Naive thymus-derived CD8-positive, alpha-beta T cell (primary cell): ENCODE measurements at regions of chr16 and their contacts with region 1.

Region 1: GRCh38 chr16:29805378-29806098 is 791 bp upstream of the MAZ start:
- DNase-seq: peak; percentile 95 to 99 (median 98)
- ATAC-seq: peak; percentile 61 to 70
- H3K4me3 Mint-ChIP-seq: peak overlapping the region; percentile 87 to 100 (median 99)
- H3K27ac Mint-ChIP-seq: peak overlapping the region; percentile 98 to 100 (median 100)
- H3K4me1 Mint-ChIP-seq: peaks cover 22 to 50% (median 42%) of the 10 kb centered on the region in 4 donors
- H3K27me3 Mint-ChIP-seq: peaks cover 0 to 1% (median 0%) of the 10 kb centered on the region in 5 donors

Region 2: DNA sequence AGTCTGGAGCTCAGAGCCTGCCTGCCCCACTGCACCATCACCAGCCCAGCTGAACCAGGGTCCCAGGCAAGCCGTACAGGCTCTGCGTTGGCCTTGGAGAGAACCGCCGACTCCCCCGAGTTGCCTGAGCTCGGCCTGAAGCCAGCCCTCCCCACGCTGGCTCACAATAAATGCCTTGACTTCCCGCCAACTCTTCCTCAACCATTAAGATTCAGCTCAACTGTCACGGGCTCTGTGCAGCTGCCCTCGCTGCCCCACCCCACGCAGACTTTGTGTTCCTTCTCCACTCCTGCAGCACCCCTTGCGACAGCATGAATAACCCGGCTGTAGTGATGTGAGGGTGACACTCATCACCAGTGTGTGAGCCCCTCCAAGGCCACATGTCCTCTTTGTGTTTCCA is 131.3 kb before region 1 on chr16:
- POLR2A ChIA-PET with region 1: no interaction called
- DNase-seq: no peak
- ATAC-seq: peak; percentile 39 to 52
- H3K4me3 Mint-ChIP-seq: no peak overlapping the region
- H3K27ac Mint-ChIP-seq: peak overlapping the region; percentile 28 to 86 (median 62)
- H3K4me1 Mint-ChIP-seq: peaks cover 7 to 34% (median 26%) of the 10 kb centered on the region in 4 donors
- H3K27me3 Mint-ChIP-seq: no peaks in the 10 kb centered on the region

Region 3: GRCh38 chr16:29694384-29695195 is 110.9 kb before region 1 on chr16:
- POLR2A ChIA-PET with region 1: interaction called, 148 read pairs
- DNase-seq: no peak
- ATAC-seq: no peak
- H3K4me3 Mint-ChIP-seq: no peak overlapping the region
- H3K27ac Mint-ChIP-seq: no peak overlapping the region
- H3K4me1 Mint-ChIP-seq: peaks cover 2 to 8% (median 6%) of the 10 kb centered on the region in 4 donors
- H3K27me3 Mint-ChIP-seq: peaks cover 0 to 1% (median 0%) of the 10 kb centered on the region in 5 donors

Region 4: DNA sequence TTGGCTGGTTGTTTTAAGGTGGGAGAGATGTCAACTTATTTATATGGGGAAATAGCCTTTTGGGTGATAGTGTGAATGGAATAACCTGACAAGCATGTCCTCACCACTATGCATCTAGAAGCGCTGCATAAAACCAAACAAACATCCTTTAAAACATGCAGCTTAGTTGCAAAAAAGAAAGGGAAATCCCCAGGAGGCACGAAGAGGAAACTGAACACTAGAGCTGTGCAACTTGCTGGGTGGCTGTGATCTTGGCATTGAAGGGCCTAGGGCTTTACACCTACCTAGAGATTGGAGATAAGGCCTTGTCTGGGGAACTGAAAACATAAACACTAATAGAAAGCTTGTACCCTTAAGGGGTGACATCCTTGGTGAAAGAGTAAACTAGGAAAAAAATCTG is 67.0 kb before region 1 on chr16:
- POLR2A ChIA-PET with region 1: interaction called, 123 read pairs
- DNase-seq: peak; percentile 25 to 83 (median 72)
- ATAC-seq: peak; percentile 79 to 86
- H3K4me3 Mint-ChIP-seq: peak overlapping the region; percentile 36 to 80 (median 66)
- H3K27ac Mint-ChIP-seq: peak overlapping the region; percentile 82 to 100 (median 95)
- H3K4me1 Mint-ChIP-seq: peaks cover 58 to 88% (median 85%) of the 10 kb centered on the region in 4 donors
- H3K27me3 Mint-ChIP-seq: no peaks in the 10 kb centered on the region

Region 5: DNA sequence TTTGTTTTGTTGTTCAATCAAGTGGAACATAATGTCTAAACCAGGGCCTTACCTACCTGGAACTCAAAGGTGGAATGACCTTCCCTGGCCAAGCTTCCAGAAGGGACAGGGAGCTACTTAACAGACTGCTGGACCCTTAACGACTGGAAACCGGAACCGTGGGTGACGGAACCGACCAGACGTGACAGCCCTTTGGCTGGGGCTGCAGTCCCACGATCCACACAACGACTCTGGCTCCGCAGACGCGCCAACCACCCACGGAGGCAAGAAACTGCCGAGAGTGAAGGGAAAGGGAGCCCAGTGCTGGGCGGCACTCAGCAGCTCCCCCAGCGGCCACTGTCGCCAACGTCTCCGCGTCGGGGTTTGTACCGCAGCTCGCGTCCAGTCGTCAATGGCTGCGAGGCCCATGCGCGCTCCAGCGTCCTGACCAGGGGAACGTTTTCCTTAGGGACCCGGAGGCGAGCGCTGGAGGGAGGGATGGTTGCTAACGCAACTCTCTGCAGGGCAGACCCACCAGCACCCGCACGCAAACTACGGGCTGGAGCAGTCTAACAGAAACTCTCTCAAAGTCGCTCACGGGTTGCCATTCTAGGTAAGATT is 20.5 kb before region 1 on chr16:
- POLR2A ChIA-PET with region 1: interaction called, 240 read pairs
- DNase-seq: peak; percentile 50 to 82 (median 64)
- ATAC-seq: peak; percentile 89 to 93
- H3K4me3 Mint-ChIP-seq: peak overlapping the region; percentile 58 to 75 (median 72)
- H3K27ac Mint-ChIP-seq: peak overlapping the region; percentile 54 to 92 (median 82)
- H3K4me1 Mint-ChIP-seq: peaks cover 17 to 40% (median 32%) of the 10 kb centered on the region in 4 donors
- H3K27me3 Mint-ChIP-seq: no peaks in the 10 kb centered on the region

Region 6: DNA sequence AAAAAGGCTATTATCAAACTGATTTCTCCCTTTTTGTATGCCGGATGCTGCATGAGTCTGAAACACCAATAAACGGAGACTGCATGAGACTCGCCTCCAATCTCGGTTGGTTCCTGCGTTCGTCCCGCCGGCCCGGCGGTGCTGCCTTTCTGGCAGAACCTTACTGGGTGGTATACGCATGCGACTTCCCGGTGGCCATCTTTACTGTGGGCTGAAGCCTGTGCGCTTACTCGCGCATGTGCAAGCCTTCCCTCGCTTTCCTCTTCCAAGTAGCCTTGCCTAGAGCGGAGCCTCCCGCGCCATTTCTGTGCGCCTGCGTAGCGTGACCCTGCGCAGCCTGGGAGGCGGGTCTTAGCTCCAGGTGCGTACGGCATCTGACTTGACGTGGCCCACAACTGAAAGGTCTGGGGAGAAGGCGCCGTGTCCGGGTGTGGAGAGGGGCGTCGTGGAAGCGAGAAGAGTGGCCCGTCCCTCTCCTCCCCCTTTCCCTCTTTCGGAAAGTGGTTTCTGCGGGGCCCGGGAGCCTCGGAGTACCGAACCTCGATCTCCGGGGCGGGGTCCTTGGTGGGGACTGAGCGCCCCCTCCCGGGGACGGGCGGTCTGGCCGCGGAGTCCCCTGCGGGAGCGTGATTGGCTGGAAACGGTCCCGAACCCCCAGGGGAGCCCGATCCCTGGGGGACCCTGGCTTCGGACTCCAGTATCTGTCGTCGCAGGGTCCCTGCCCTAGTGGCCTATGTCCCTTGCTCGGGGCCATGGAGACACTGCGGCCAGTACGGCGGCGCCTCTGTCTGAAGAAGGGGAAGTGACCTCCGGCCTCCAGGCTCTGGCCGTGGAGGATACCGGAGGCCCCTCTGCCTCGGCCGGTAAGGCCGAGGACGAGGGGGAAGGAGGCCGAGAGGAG is 10.5 kb after region 1 on chr16 and contains the start of gene PAGR1:
- POLR2A ChIA-PET with region 1: interaction called, 204 read pairs
- DNase-seq: peak; percentile 91 to 100 (median 99)
- ATAC-seq: peak; percentile 71 to 80
- H3K4me3 Mint-ChIP-seq: peak within 1 kb of the TSS; percentile 93 to 100 (median 96)
- H3K27ac Mint-ChIP-seq: peak within 1 kb of the TSS; percentile 93 to 100 (median 98)
- H3K4me1 Mint-ChIP-seq: peaks cover 44 to 93% (median 70%) of the 10 kb centered on the region in 4 donors
- H3K27me3 Mint-ChIP-seq: peaks cover 0 to 1% (median 0%) of the 10 kb centered on the region in 5 donors
- polyA plus RNA-seq, gene PAGR1: 51.4 to 57.5 (median 55.5) TPM

Region 7: DNA sequence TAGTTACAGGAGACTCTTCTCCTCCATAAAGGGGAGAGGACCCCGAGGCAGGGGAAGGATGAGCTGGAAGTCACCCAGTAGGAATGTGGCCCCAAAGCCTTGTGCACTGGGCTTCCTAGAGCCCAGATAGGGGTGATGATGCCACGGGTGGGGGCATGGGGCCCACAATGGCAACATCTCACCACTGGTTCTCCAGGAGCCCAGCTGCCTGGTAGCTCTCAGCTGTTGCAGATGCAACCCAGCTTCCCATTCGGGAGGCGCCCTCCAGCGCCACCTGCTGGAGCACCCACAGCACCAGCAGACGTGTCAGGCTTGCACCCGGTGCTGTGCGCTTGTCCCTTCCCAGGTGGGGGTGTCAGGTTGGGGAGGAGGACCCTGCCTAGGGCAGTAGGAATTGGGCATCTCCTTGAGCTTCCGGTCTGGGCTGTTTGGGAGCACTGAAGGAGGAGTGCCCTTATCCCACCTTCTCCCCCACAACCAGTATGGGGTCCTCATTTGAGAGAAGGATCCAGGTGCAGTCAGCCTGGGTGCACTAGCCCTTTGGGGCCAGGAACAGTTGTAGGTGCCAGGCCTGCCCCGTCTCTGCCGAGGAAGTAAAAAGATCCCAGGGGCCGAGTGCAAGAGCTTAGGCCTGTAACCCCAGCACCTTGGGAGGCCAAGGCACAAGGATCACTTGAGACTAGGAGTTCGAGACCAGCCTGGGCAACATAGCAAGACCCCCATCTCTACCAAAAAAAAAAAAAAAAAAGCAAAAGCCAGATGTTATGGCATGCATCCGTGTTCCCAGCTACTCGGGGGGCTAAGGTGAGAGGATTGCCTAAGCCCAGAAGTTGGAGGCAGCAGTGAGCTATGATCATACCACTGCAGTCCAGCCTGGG is 43.1 kb after region 1 on chr16:
- POLR2A ChIA-PET with region 1: interaction called, 87 read pairs
- DNase-seq: peak; percentile 64 to 90 (median 80)
- ATAC-seq: peak; percentile 96 to 98
- H3K4me3 Mint-ChIP-seq: peak overlapping the region in 1 of 10 donors; percentile 19
- H3K27ac Mint-ChIP-seq: peak overlapping the region; percentile 40 to 88 (median 68)
- H3K4me1 Mint-ChIP-seq: peaks cover 6 to 12% (median 8%) of the 10 kb centered on the region in 4 donors
- H3K27me3 Mint-ChIP-seq: no peaks in the 10 kb centered on the region

Region 8: GRCh38 chr16:29926005-29926710 is 120.6 kb after region 1 on chr16 and contains the start of gene KCTD13:
- POLR2A ChIA-PET with region 1: interaction called, 13 read pairs
- DNase-seq: peak; percentile 79 to 97 (median 91)
- ATAC-seq: peak; percentile 88 to 93
- H3K4me3 Mint-ChIP-seq: peak within 1 kb of the TSS; percentile 90 to 97 (median 94)
- H3K27ac Mint-ChIP-seq: peak within 1 kb of the TSS; percentile 90 to 98 (median 97)
- H3K4me1 Mint-ChIP-seq: peaks cover 13 to 44% (median 38%) of the 10 kb centered on the region in 4 donors
- H3K27me3 Mint-ChIP-seq: no peaks in the 10 kb centered on the region
- polyA plus RNA-seq, gene KCTD13: 5.4 to 10.0 (median 8.4) TPM